ENCODE measurements at regions of chr3 and their contacts with region 1.

Region 1: GRCh38 chr3:133573054-133573628 is 345 bp upstream of the CDV3 start:
- DNase-seq: peak; percentile 99
- ATAC-seq: peak; percentile 82
- H3K4me3 Mint-ChIP-seq: peak overlapping the region; percentile 86
- H3K27ac Mint-ChIP-seq: peak overlapping the region; percentile 97
- H3K4me1 Mint-ChIP-seq: peaks cover 42% of the 10 kb centered on the region
- H3K27me3 Mint-ChIP-seq: no peaks in the 10 kb centered on the region

Region 2: GRCh38 chr3:133487920-133488540 is 85.1 kb before region 1 on chr3:
- POLR2A ChIA-PET with region 1: interaction called, 119 read pairs
- DNase-seq: no peak
- ATAC-seq: no peak
- H3K4me3 Mint-ChIP-seq: no peak overlapping the region
- H3K27ac Mint-ChIP-seq: no peak overlapping the region
- H3K4me1 Mint-ChIP-seq: peaks cover 48% of the 10 kb centered on the region
- H3K27me3 Mint-ChIP-seq: no peaks in the 10 kb centered on the region

Region 3: DNA sequence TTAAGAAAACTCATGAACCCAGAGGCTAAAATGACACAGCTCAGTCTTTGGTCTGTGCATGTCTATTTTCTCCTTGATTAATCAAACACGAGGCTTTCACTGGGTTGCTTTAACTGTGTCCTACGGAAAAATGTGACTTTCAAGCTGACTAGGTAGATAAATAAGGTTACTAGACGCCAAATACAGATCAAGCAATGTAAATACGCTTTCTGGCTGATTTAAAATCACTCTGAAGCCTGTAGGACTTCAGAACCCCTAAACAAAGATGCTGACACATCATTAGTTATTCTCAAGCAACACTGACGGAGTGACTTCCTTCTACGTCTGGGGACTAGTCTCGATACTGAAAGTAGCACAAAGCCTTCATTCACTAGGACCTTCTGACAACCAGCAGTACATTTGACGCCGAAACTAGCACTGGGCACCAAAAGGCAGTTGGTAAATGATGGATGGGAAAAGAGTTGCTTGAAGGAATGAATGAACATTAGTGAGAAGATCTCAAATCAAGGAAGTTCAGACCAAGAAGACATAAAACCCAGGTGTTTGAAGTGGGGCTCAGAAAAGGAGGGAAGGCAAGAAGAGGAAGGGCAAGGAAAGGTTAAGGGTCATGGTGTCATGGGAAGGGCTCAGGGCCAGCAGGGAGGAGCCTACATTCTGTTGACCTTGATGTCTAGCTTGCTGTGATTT is 66.8 kb before region 1 on chr3:
- POLR2A ChIA-PET with region 1: interaction called, 19 read pairs
- DNase-seq: no peak
- ATAC-seq: peak; percentile 100
- H3K4me3 Mint-ChIP-seq: peak overlapping the region; percentile 71
- H3K27ac Mint-ChIP-seq: peak overlapping the region; percentile 93
- H3K4me1 Mint-ChIP-seq: peaks cover 12% of the 10 kb centered on the region
- H3K27me3 Mint-ChIP-seq: no peaks in the 10 kb centered on the region

Region 4: DNA sequence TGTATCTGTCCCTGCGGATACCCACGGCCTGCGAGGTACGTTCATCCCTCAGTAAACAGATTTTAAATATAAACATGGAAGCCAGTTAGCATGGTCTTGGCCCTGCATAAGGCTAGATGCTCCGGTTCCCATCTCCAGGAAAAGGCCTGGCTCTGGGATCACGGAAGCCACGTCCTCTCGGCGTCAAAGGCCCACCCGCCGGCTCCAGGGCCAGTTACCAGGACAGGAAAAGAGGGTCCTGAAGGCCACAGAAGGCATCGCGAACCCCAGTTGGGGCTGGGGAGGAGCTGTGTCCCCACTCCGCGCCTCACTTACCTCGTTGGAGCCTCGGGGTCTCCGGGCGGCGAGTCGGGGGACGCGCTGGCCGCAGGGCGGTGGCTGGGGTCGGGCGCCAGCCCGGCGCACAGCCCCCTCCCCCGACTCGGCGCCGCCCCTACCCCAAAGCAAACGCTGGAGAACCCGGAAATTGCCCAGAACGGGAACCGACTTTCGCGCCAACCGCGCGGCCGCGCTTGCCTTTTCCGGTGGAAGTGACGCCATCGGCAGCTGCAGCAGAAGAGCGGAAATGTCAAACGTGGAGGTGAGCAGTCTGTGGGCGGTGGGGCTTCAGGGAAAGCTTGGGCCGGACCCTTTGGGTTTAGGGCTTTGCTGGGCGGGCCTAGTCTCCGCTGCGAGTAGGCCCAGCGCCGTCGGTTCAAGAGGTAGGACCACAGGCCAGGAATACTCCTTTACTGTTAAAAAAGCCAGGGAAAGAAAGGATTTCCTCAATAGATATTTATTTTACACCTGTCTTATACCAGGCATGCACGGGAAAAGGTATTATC is 88.5 kb after region 1 on chr3 and contains the start of gene TOPBP1:
- POLR2A ChIA-PET with region 1: interaction called, 21 read pairs
- DNase-seq: peak; percentile 88
- ATAC-seq: peak; percentile 85
- H3K4me3 Mint-ChIP-seq: peak within 1 kb of the TSS; percentile 97
- H3K27ac Mint-ChIP-seq: peak within 1 kb of the TSS; percentile 97
- H3K4me1 Mint-ChIP-seq: peaks cover 35% of the 10 kb centered on the region
- H3K27me3 Mint-ChIP-seq: no peaks in the 10 kb centered on the region
- total RNA-seq, gene TOPBP1: 82.0 to 84.0 TPM